ENCODE measurements at regions of chr4 and their contacts with region 1.

Region 1: GRCh38 chr4:184263910-184264732 is 46.4 kb upstream of the ENPP6 start:
- DNase-seq: peak; percentile 85 to 92 (median 88)
- H3K4me3 ChIP-seq: no peak overlapping the region
- H3K4me3 Mint-ChIP-seq: peak overlapping the region in 5 of 8 donors; percentile 0 to 55 (median 38)
- H3K27ac ChIP-seq: no peak overlapping the region
- H3K27ac Mint-ChIP-seq: peak overlapping the region; percentile 3 to 75 (median 31)
- H3K4me1 ChIP-seq: peaks cover 28% of the 10 kb centered on the region
- H3K4me1 Mint-ChIP-seq: peaks cover 24 to 41% (median 35%) of the 10 kb centered on the region in 4 donors
- H3K27me3 ChIP-seq: no peaks in the 10 kb centered on the region
- H3K27me3 Mint-ChIP-seq: peaks cover 0 to 2% of the 10 kb centered on the region in 2 donors

Region 2: DNA sequence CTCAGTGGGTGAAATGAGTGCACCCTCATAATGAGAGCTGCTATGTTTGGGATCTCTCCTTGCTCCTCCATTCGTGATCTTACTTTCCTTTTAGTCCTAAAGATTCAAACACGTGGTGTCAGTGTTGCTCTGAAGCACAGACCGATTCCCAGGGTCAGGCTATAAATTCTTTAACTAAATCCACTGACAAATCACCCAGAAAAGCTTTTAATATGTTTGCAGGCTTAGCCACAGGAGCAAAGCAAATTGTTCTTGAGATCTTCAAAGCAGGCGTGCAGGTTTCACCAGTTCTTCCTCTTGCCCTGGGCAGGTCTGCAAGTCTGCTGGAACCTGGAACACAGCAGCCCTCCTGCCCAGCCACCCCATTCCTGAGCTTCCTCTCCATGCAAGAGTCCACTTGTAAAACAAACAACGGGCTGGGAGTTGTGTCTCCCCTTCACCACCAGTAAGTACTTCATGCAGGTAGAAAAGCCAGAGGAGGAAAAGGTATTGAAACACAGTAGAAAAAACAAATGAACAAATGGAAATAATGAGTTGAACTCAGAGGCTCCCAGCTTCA is 23.7 kb after region 1 on chr4:
- CTCF ChIA-PET with region 1: interaction called, 8 read pairs
- POLR2A ChIA-PET with region 1: interaction called, 35 read pairs
- intact Hi-C with region 1: loop called (anchors 2 kb)
- DNase-seq: no peak
- H3K4me3 ChIP-seq: no peak overlapping the region
- H3K4me3 Mint-ChIP-seq: peak overlapping the region in 6 of 8 donors; percentile 22 to 82 (median 75)
- H3K27ac ChIP-seq: no peak overlapping the region
- H3K27ac Mint-ChIP-seq: peak overlapping the region in 1 of 7 donors; percentile 70
- H3K4me1 ChIP-seq: peaks cover 28% of the 10 kb centered on the region
- H3K4me1 Mint-ChIP-seq: peaks cover 15 to 36% (median 31%) of the 10 kb centered on the region in 4 donors
- H3K27me3 ChIP-seq: no peaks in the 10 kb centered on the region
- H3K27me3 Mint-ChIP-seq: no peaks in the 10 kb centered on the region

Region 3: DNA sequence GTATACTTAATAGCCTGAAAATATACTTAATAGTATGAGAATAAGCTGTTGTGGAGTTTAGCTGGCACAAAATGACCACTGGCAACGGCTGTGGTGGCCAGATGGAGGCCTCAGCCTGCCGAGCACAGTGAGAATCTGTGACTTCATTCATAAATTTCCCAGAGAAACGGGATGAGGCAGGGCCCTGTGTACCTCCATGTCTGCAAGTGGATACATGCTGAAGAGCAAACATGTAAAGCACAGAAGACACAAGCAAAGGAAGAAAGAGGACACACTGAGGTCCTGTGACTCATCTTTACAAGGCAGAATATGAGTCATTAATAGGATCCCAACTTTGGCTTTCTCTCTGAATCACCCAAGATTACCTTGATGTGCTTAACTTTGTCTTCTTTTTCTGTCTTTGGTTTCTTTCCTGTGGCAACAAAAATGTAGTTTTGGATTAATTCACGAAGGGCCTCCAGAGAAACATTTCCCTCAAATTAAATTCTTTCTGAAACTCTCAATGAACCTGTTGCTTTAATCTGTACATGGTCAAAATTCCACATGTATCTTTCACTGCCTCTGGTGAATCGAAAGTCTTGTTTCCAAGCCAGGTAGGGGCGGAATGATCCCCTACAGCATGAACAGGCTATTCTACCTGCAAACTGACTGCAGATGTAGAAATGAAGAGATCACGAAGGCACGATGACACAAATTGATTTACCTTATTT is 153.8 kb after region 1 on chr4:
- CTCF ChIA-PET with region 1: interaction called, 16 read pairs
- POLR2A ChIA-PET with region 1: interaction called, 9 read pairs
- intact Hi-C with region 1: loop called (anchors 5 kb)
- DNase-seq: peak in 3 of 5 donors; percentile 18 to 62 (median 28)
- H3K4me3 ChIP-seq: peak overlapping the region in 1 of 2 donors; percentile 63
- H3K4me3 Mint-ChIP-seq: peak overlapping the region; percentile 22 to 89 (median 82)
- H3K27ac ChIP-seq: peak overlapping the region; percentile 81
- H3K27ac Mint-ChIP-seq: peak overlapping the region; percentile 94 to 99 (median 98)
- H3K4me1 ChIP-seq: peaks cover 79% of the 10 kb centered on the region
- H3K4me1 Mint-ChIP-seq: peaks cover 55 to 83% (median 69%) of the 10 kb centered on the region in 4 donors
- H3K27me3 ChIP-seq: no peaks in the 10 kb centered on the region
- H3K27me3 Mint-ChIP-seq: no peaks in the 10 kb centered on the region

Region 4: DNA sequence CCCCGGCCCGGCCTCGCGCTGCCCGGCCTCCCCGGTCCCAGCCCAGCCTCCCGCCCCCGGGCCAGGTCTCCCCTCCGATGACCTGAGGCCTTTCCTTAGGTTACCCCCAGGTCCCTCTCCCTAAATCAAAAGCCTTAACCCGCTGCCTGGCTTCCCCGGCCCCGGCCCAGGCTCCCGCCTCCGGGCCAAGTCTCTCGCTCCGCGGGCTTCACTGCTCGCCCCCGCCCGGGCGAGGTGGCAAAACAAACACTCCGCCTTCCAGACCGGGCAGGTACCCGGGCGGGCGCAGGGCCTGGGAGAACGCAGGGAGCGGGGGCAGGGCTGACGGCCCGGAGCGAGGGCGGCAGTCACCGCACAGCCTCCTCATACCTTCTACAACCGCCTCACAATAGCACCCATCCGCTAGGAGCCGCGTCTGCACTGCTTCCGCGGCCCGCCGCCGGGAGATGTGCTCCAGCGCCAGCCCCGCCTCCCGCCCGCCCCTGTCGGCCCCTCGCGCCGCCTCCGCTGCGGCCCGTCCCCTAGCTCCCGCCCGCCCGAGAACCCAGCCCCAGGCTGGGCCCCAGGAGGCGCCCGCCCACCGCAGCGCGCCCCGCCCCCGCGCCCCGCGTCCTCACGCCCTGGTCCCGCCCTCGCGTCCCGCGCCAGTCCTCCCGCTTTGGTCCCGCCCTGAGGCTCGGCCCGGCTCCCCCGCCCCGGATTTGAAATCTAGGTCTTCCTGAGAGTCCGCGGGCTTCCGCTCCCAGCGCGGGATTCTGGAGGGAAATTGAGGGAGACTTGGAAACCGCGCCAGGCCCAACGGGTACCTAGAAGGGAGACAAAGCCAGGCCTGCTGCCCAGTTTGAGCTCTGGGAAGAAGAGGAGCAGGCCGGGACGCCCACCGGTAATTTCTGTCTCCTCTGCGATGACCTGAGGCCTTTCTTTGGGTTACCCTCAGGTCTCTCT is 385.2 kb after region 1 on chr4 and contains the starts of genes CASP3 and PRIMPOL:
- CTCF ChIA-PET with region 1: interaction called, 11 read pairs
- POLR2A ChIA-PET with region 1: interaction called, 25 read pairs
- intact Hi-C with region 1: loop called (anchors 1 kb)
- DNase-seq: peak; percentile 92 to 95 (median 94)
- H3K4me3 ChIP-seq: peak within 1 kb of the TSS; percentile 81 to 85
- H3K4me3 Mint-ChIP-seq: peak within 1 kb of the TSS; percentile 92 to 98 (median 96)
- H3K27ac ChIP-seq: peak within 1 kb of the TSS; percentile 88
- H3K27ac Mint-ChIP-seq: peak within 1 kb of the TSS; percentile 90 to 97 (median 95)
- H3K4me1 ChIP-seq: peaks cover 51% of the 10 kb centered on the region
- H3K4me1 Mint-ChIP-seq: peaks cover 46 to 54% (median 50%) of the 10 kb centered on the region in 4 donors
- H3K27me3 ChIP-seq: no peaks in the 10 kb centered on the region
- H3K27me3 Mint-ChIP-seq: no peaks in the 10 kb centered on the region
- total RNA-seq, gene CASP3: 17.9 to 24.9 TPM
- total RNA-seq, gene PRIMPOL: 20.2 to 23.2 TPM

Region 5: GRCh38 chr4:184762100-184762499 is 498.0 kb after region 1 on chr4:
- CTCF ChIA-PET with region 1: interaction called, 3 read pairs
- POLR2A ChIA-PET with region 1: no interaction called
- intact Hi-C with region 1: loop called (anchors 1 kb)
- DNase-seq: peak; percentile 57 to 79 (median 72)
- H3K4me3 ChIP-seq: peak overlapping the region in 1 of 2 donors; percentile 44
- H3K4me3 Mint-ChIP-seq: peak overlapping the region; percentile 59 to 85 (median 77)
- H3K27ac ChIP-seq: no peak overlapping the region
- H3K27ac Mint-ChIP-seq: peak overlapping the region; percentile 71 to 95 (median 87)
- H3K4me1 ChIP-seq: peaks cover 15% of the 10 kb centered on the region
- H3K4me1 Mint-ChIP-seq: peaks cover 6 to 19% (median 15%) of the 10 kb centered on the region in 4 donors
- H3K27me3 ChIP-seq: no peaks in the 10 kb centered on the region
- H3K27me3 Mint-ChIP-seq: no peaks in the 10 kb centered on the region

Region 6: GRCh38 chr4:185096032-185096653 is 832.0 kb after region 1 on chr4:
- CTCF ChIA-PET with region 1: interaction called, 10 read pairs
- POLR2A ChIA-PET with region 1: no interaction called
- intact Hi-C with region 1: no loop called
- DNase-seq: peak in 4 of 5 donors; percentile 12 to 18 (median 14)
- H3K4me3 ChIP-seq: no peak overlapping the region
- H3K4me3 Mint-ChIP-seq: no peak overlapping the region
- H3K27ac ChIP-seq: no peak overlapping the region
- H3K27ac Mint-ChIP-seq: no peak overlapping the region
- H3K4me1 ChIP-seq: no peaks in the 10 kb centered on the region
- H3K4me1 Mint-ChIP-seq: no peaks in the 10 kb centered on the region
- H3K27me3 ChIP-seq: no peaks in the 10 kb centered on the region
- H3K27me3 Mint-ChIP-seq: peaks cover 17 to 25% of the 10 kb centered on the region in 2 donors

Measured in CD4-positive, alpha-beta memory T cell (primary cell).